AG04450 (cell line): ENCODE measurements at regions of chr15 and their contacts with region 1.

Region 1: GRCh38 chr15:98881526-98882520 is 125.8 kb downstream of the PGPEP1L start:
- DNase-seq: no peak
- H3K4me3 ChIP-seq: no peak overlapping the region
- H3K27ac ChIP-seq: no peak overlapping the region
- H3K27me3 ChIP-seq: no peaks in the 10 kb centered on the region
- CTCF ChIP-seq: peak; percentile 53

Region 2: DNA sequence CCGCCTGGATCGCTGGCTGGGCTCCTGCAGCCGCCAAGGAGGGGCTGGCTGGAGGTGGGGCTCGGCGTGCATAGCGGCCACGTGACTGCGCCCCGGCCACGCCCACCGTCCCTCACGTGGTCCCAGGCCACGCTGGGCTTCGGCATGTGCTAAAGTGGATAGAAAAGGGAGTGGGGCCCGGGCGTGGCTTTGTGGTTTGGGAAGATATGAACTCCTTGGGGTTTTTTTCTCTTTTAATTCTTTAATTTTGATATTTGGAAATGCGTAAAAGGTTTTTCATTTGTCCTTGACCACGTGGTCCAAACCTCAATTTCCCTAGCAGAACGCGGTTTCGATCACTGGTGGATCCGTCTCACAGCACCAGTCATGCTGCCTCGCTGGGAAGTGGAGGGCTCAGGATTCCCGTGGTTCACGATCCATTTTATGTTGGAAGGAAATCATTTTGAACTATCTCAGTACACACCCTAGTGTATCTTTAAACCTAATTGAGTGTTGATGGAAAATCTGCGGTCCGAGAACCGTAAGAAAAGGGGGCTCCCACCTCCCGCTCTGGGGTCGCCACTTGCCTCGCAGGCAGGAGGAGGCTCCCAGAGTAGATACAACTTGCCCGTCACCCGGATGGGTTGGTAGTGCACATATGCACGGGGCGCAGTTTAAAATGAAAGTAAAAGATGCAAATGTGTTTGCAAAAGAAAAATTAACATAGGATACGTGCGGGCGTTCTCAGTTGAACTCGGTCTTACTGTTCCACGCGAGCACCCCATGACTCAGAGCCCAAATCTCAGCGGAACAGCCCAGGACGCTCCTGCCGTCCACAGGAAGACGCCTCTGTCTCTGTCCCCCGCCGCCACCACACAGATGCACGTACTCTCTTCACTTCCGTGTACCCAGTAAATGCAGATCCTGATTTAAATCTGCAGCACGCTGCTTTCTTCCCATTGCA is 16.2 kb before region 1 on chr15:
- CTCF ChIA-PET with region 1: interaction called, 10 read pairs
- POLR2A ChIA-PET with region 1: no interaction called
- DNase-seq: no peak
- H3K4me3 ChIP-seq: peak overlapping the region; percentile 59
- H3K27ac ChIP-seq: peak overlapping the region; percentile 89
- H3K27me3 ChIP-seq: no peaks in the 10 kb centered on the region
- CTCF ChIP-seq: no peak

Region 3: GRCh38 chr15:98896802-98897732 is 15.2 kb after region 1 on chr15:
- CTCF ChIA-PET with region 1: interaction called, 16 read pairs
- POLR2A ChIA-PET with region 1: no interaction called
- DNase-seq: peak; percentile 98
- H3K4me3 ChIP-seq: no peak overlapping the region
- H3K27ac ChIP-seq: peak overlapping the region; percentile 88
- H3K27me3 ChIP-seq: no peaks in the 10 kb centered on the region
- CTCF ChIP-seq: no peak

Region 4: GRCh38 chr15:98904544-98904943 is 22.7 kb after region 1 on chr15:
- CTCF ChIA-PET with region 1: interaction called, 10 read pairs
- POLR2A ChIA-PET with region 1: no interaction called
- DNase-seq: peak; percentile 39
- H3K4me3 ChIP-seq: no peak overlapping the region
- H3K27ac ChIP-seq: no peak overlapping the region
- H3K27me3 ChIP-seq: no peaks in the 10 kb centered on the region
- CTCF ChIP-seq: peak; percentile 78